Activated CD4-positive, alpha-beta memory T cell treated with anti-CD3 and anti-CD28 coated beads for 36 hours (primary cell): ENCODE measurements at regions of chr16 and their contacts with region 1.

Region 1: DNA sequence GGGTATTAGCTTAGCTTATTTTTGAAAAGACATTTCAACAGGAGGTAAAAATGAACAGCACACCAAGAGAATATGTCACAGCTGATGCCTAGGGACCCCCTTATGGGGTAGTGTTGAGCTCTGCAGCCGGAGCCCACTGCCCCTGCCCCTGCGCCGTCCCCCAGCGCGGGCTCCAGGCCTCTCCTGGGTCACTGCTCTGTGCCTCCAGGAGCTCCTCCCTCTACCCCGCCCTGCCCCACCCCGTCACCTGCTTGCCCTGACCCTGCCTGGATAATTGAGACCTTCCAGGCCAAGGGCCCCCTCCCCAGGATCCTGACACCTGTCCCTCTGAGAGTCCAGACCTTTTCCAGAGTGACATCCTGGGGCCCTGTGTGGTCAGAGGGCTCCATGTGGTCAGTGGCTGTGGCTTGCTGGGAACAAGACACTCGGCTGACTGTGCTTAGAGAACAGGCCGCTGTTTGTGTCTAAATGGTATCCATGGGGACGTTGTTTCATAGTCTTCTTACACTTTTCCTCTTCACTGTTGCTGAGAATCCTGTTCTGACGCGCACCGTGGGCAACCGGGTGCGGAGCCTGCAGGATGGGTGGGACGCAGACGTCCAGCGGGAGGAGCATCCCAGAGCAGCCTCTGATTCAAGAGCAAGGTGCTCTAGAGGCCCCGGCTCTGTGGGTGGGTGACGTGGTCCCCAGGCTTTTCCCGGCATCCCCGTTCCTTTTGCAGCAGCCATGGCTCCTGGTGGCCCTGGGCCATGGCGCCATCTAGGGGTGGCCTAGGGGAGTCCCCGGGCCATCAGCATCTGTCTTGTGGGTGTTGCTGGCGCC is 20.1 kb upstream of the WFIKKN1 start:
- DNase-seq: peak; percentile 76
- H3K4me3 Mint-ChIP-seq: no peak overlapping the region
- H3K27ac Mint-ChIP-seq: no peak overlapping the region
- H3K4me1 Mint-ChIP-seq: peaks cover 14% of the 10 kb centered on the region
- H3K27me3 Mint-ChIP-seq: no peaks in the 10 kb centered on the region

Region 2: DNA sequence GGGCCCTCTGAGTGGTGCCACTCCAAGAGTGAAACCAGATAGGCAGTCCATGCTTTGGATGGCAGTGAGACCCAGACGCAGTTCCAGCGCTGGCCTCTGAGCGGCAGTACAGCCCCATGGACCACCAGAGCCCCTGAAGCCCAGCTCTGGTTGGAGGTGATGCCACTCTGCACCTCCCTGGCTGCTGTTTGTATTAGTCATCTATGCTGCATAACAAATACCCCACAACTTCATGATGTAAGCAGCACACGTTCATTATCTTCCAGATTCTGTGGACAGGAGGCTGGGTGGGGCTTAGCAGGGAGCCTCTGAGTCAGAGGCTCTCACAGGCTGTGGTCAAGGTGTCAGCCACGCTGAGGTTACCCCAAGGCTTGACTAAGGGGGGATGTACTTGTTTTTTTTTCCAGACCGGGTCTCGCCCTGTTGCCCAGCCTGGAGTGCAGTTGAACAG is 218.8 kb before region 1 on chr16:
- CTCF ChIA-PET with region 1: interaction called, 4 read pairs
- POLR2A ChIA-PET with region 1: no interaction called
- intact Hi-C with region 1: loop called (anchors 5 kb)
- DNase-seq: peak; percentile 90
- H3K4me3 Mint-ChIP-seq: no peak overlapping the region
- H3K27ac Mint-ChIP-seq: peak overlapping the region; percentile 54
- H3K4me1 Mint-ChIP-seq: peaks cover 20% of the 10 kb centered on the region
- H3K27me3 Mint-ChIP-seq: no peaks in the 10 kb centered on the region

Region 3: GRCh38 chr16:546909-547770 is 63.6 kb before region 1 on chr16:
- CTCF ChIA-PET with region 1: no interaction called
- POLR2A ChIA-PET with region 1: no interaction called
- intact Hi-C with region 1: no loop called
- DNase-seq: peak; percentile 57
- H3K4me3 Mint-ChIP-seq: no peak overlapping the region
- H3K27ac Mint-ChIP-seq: no peak overlapping the region
- H3K4me1 Mint-ChIP-seq: no peaks in the 10 kb centered on the region
- H3K27me3 Mint-ChIP-seq: no peaks in the 10 kb centered on the region

Region 4: DNA sequence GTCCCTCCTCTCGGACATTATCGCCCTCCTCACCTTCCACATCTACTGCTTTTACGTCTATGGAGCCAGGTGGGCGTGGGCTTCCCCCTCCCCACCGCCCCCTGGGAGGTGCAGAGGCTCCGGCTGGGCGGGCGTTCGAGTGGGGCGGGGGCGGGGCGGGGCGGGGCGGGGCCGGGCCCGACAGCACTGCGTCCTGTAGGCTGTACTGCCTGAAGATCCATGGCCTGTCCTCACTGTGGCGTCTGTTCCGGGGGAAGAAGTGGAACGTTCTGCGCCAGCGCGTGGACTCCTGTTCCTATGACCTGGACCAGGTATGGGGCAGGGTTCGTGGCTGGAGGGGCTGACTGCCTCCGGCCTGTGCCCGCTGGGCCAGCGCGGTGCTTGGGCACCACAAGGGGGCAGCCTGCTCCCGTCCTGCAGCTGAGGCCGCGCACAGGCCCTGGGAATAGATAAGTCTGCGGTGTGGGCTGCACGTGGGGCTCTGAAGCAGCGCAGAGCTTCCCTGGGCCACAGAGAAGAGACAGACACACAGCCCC is 31.8 kb before region 1 on chr16:
- CTCF ChIA-PET with region 1: interaction called, 12 read pairs
- POLR2A ChIA-PET with region 1: no interaction called
- intact Hi-C with region 1: loop called (anchors 1 kb)
- DNase-seq: peak; percentile 81
- H3K4me3 Mint-ChIP-seq: no peak overlapping the region
- H3K27ac Mint-ChIP-seq: no peak overlapping the region
- H3K4me1 Mint-ChIP-seq: no peaks in the 10 kb centered on the region
- H3K27me3 Mint-ChIP-seq: no peaks in the 10 kb centered on the region